Calu3 (cell line): ENCODE measurements at regions of chr1 and their contacts with region 1.

Region 1: DNA sequence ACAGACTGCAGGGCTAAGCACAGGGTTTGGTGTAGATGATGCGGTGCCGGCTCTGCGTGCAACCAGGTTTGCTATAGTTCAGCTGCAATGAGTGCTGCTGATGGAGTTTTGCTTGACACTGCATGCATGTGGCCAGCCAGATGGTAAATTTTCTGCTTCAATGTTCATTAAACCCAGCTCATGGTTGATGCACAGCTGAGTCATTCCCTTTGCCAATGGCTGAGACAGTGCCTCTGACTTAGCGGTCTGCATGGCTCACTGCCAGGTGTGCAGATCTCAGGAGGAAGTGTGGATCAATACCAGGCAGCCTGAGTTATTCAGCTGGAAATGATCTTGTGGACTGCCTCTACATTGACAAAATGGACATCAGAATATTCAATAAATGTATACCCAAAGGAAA is 172.7 kb upstream of the ZP4 start:
- DNase-seq: peak; percentile 86
- H3K4me3 Mint-ChIP-seq: no peak overlapping the region
- H3K27ac Mint-ChIP-seq: peak overlapping the region; percentile 63
- H3K4me1 Mint-ChIP-seq: peaks cover 42% of the 10 kb centered on the region
- H3K27me3 Mint-ChIP-seq: no peaks in the 10 kb centered on the region
- CTCF ChIP-seq: no peak

Region 2: DNA sequence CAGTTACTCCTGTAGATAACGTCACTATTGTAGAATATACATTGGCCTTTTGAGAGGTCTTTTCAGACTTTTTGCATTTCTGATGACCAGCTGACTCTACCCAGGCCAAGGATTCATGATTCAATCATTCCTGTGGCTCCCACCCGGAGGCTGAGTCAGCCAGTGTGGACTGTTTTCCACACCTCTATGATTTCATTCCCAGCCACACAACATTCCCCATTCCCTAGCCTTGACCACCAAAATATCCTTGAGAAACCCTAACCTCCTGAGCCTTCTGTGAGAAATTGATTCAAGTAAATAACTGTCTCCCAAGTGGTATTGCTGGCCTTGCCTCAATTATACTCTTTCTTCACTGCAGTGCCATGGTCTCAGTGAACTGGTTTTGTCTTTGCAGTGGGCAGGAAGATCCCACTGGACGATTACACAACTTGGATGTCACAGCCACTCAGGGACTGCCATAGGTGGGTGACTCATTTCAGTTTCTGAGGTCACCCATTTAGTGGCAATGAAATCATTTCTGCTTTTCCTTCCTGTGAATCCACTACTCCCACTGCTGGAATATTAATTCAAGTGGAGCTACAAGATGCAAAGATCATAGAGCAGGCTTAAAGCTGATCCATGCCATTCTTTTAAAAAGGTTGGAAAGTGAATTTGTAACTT is 345.9 kb after region 1 on chr1:
- CTCF ChIA-PET with region 1: no interaction called
- intact Hi-C with region 1: loop called (anchors 10 kb)
- DNase-seq: peak; percentile 8
- H3K4me3 Mint-ChIP-seq: no peak overlapping the region
- H3K27ac Mint-ChIP-seq: peak overlapping the region; percentile 71
- H3K4me1 Mint-ChIP-seq: peaks cover 8% of the 10 kb centered on the region
- H3K27me3 Mint-ChIP-seq: no peaks in the 10 kb centered on the region
- CTCF ChIP-seq: no peak